GM18951 (cell line): ENCODE measurements at regions of chr2 and their contacts with region 1.

Region 1: DNA sequence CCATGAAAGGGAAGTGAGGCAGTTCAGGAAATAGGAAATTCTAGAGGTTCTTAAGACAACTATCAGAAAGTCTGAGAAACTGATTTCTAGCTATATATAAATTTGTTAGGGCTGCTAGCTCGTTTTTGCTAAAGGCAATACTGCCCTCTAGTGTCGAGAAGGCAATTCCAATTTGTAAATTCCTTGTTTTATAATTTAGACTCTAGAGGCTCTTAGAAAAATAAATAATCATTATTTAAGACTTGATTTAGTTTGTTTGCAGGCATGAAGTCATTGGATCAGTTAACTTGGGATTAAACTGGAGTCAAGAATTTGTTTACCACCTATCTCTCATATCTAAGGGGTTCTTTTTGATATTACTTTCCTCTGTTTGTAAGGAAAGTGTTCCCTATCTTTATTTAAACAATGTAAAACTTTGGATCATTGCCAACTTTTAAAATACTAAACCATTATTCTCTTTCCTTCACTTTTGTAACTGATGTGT is 66.2 kb downstream of the ACVR2A start:
- POLR2A ChIP-seq: no peak

Region 2: DNA sequence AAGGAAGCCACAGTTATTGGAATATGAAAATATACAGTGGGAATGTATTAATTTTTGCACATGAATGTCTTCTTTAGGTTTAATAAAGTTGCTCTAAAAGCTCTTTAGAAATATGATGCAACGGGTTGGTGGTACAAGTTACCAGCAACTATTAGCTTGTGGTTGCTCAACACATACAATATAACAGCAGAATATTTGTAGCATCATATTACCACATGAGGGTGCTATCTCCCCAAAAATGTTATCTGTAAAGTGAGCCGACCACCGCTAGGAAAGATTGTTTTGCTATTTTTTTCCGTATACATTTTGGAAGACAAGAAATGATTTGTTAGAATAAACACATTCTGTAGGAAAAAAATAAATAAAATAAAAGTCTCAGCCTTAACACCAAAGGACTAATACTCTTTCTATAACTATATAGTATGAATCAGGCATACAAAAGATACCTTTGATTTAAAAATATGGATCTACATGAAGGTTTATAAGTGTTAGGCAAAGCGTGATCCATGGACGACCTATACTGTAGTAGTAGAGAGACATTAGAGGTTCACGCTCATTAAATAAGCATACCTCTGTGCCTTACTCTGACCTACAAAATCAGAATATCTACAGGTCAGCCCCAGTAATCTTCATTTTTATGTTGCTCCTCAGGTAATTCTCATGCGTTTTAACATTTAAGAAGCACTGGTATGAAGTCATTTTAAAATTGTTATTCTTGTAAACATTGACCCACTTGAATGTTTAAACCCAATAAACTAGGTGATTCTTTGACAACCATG is 1176.8 kb before region 1 on chr2:
- in situ Hi-C with region 1: loop called (anchors 25 kb)
- POLR2A ChIP-seq: no peak

Region 3: GRCh38 chr2:147076634-147077033 is 834.4 kb before region 1 on chr2:
- in situ Hi-C with region 1: loop called (anchors 10 kb)
- POLR2A ChIP-seq: no peak

Region 4: DNA sequence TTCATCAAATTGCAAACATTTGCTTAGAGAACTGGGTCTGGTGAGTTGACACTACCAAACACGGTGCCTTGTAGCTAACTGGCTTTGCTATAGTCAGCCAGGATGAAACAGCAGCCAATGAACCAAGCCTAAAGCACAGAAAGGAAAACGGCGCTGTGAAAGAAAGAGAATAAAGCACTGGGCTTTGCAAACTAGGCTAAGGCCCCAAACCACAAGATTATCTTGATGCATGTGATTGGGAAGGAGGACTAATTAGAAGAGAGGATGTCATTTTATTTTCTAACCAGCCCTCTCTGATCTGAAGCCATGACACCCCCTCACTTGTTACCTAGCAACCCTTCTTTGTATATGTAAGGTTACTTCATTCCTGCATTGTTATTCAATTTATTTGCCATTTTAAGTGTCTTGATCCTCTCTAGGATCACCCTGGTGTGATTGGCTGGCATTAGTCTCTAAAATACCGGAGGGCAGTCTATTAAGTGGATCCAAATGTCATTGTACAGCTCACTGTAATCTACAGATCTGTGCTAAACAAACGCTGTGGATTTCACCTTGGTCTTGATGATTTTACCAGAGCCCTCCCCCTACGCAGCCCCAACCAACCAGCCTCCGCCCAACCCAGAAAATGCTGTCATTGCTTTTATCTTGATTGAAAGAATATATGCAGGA is 461.6 kb before region 1 on chr2:
- in situ Hi-C with region 1: no loop called
- POLR2A ChIP-seq: no peak